ENCODE measurements at regions of chr14 and their contacts with region 1.

Region 1: DNA sequence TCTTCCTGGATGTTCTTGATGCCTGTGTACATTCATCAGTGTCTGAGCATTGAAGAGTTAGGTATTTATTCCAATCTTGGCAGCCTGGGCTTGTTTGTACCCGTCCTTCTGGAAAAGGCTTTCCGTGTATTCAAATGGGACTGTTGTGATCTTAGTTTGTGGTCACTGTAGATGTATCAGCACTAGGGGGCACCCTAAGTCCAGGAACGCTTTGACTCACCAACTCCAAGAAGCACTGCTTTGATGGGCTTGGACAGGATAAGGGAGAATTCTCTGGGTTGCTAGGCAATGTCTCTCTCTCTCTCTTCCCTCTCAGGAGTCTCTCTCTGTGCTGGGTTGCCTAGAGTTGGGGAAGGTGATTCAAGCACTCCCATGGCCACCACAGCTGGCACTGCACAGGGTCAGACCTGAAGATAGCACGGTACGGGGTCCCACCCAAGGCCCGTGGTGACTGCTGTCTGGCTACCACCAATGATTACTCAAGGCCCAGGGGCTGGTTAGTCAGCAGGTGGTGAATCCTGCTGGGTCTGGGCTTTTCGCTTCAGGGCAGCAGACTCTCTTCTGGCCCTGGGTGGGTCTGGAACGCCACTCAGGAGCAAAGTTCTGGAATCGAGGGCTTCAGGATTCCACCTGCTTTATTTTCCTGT is 211.1 kb upstream of the RGS6 start:
- DNase-seq: peak; percentile 64
- H3K4me3 Mint-ChIP-seq: no peak overlapping the region
- H3K27ac Mint-ChIP-seq: no peak overlapping the region
- H3K4me1 Mint-ChIP-seq: no peaks in the 10 kb centered on the region
- H3K27me3 Mint-ChIP-seq: no peaks in the 10 kb centered on the region
- CTCF ChIP-seq: peak; percentile 36

Region 2: GRCh38 chr14:72291908-72292688 is 571.0 kb after region 1 on chr14:
- CTCF ChIA-PET with region 1: no interaction called
- intact Hi-C with region 1: loop called (anchors 10 kb)
- DNase-seq: peak; percentile 49
- H3K4me3 Mint-ChIP-seq: no peak overlapping the region
- H3K27ac Mint-ChIP-seq: no peak overlapping the region
- H3K4me1 Mint-ChIP-seq: no peaks in the 10 kb centered on the region
- H3K27me3 Mint-ChIP-seq: peaks cover 42% of the 10 kb centered on the region
- CTCF ChIP-seq: peak; percentile 26